ENCODE measurements at regions of chr3 and their contacts with region 1.

Region 1: GRCh38 chr3:33636125-33636850 is 81.8 kb downstream of the CLASP2 start:
- DNase-seq: no peak
- ATAC-seq: no peak
- H3K4me3 ChIP-seq: no peak overlapping the region
- H3K27ac ChIP-seq: no peak overlapping the region
- H3K4me1 ChIP-seq: no peaks in the 10 kb centered on the region
- H3K27me3 ChIP-seq: no peaks in the 10 kb centered on the region

Region 2: GRCh38 chr3:33482111-33482521 is 154.2 kb before region 1 on chr3:
- intact Hi-C with region 1: no loop called
- DNase-seq: no peak
- ATAC-seq: no peak
- H3K4me3 ChIP-seq: no peak overlapping the region
- H3K27ac ChIP-seq: no peak overlapping the region
- H3K4me1 ChIP-seq: no peaks in the 10 kb centered on the region
- H3K27me3 ChIP-seq: no peaks in the 10 kb centered on the region

Region 3: GRCh38 chr3:33537133-33537532 is 99.2 kb before region 1 on chr3:
- intact Hi-C with region 1: no loop called
- DNase-seq: no peak
- ATAC-seq: peak; percentile 59 to 69
- H3K4me3 ChIP-seq: no peak overlapping the region
- H3K27ac ChIP-seq: peak overlapping the region; percentile 57
- H3K4me1 ChIP-seq: no peaks in the 10 kb centered on the region
- H3K27me3 ChIP-seq: no peaks in the 10 kb centered on the region

Region 4: DNA sequence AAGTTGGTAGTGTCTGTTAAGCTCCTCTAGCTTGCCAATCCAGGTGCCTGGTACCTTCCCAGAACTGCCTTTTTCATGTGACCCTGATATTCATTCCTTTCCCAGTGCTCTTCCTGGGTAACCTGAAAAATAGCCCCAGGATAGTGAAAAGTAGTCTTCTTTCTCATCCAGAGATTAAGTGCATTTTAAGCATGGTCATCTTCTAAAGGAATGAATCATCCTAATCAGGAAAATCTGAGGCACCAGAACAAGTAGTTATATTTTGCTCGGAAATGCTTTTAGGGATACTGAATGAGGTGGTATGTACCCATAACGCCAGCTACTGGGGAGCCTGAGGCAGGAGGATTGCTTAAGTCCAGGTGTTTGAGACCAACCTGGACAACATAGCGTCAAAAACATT is 139.1 kb after region 1 on chr3:
- intact Hi-C with region 1: loop called in 1 of 4 experiments (anchors 5 kb)
- DNase-seq: no peak
- ATAC-seq: no peak
- H3K4me3 ChIP-seq: no peak overlapping the region
- H3K27ac ChIP-seq: no peak overlapping the region
- H3K4me1 ChIP-seq: no peaks in the 10 kb centered on the region
- H3K27me3 ChIP-seq: no peaks in the 10 kb centered on the region

Region 5: DNA sequence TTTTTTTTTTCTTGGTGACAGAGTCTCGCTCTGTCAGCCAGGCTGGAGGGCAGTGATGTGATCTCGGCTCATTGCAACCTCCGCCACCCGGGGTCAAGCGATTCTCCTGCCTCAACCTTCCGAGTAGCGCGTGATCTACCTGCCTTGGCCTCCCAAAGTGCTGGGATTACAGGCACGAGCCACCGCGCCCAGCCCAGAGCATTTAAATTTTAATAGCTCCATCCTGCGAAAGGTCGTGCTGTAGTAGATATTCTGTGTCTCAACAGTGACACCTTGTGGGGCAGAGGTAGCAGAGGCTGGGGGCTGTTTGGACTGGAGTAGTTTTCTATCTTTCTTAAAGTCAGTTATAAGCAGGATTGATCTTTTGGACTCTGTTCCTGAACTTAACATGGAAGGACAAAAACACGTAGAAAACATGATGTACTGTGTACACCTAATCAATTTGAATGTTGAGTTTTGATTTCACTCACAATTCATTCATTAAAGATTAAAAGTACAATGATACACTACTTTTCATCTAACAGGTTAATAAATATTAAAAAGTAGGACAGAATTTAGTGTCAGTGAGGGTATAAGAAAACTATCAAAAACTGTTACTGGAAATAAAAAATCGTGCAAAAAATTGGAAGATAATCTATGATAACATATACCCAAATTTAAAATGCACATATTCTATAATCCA is 151.2 kb after region 1 on chr3:
- intact Hi-C with region 1: loop called in 3 of 4 experiments (anchors 5 kb)
- DNase-seq: peak; percentile 27 to 64 (median 62)
- ATAC-seq: peak; percentile 87 to 93
- H3K4me3 ChIP-seq: peak overlapping the region; percentile 33
- H3K27ac ChIP-seq: no peak overlapping the region
- H3K4me1 ChIP-seq: no peaks in the 10 kb centered on the region
- H3K27me3 ChIP-seq: no peaks in the 10 kb centered on the region